CD4-positive, alpha-beta T cell (primary cell): ENCODE measurements at regions of chr5 and their contacts with region 1.

Region 1: GRCh38 chr5:69189162-69190086 is at the start of gene CENPH:
- DNase-seq: peak; percentile 80 to 94 (median 88)
- ATAC-seq: peak; percentile 92
- H3K4me3 ChIP-seq: peak within 1 kb of the TSS; percentile 80
- H3K4me3 Mint-ChIP-seq: peak within 1 kb of the TSS; percentile 92
- H3K27ac ChIP-seq: peak within 1 kb of the TSS; percentile 64 to 68
- H3K27ac Mint-ChIP-seq: peak within 1 kb of the TSS; percentile 83
- H3K4me1 ChIP-seq: peaks cover 17% of the 10 kb centered on the region
- H3K4me1 Mint-ChIP-seq: peaks cover 17% of the 10 kb centered on the region
- H3K27me3 ChIP-seq: no peaks in the 10 kb centered on the region
- H3K27me3 Mint-ChIP-seq: no peaks in the 10 kb centered on the region
- CTCF ChIP-seq: no peak
- total RNA-seq, gene CENPH: 4.0 to 5.6 TPM

Region 2: GRCh38 chr5:69013481-69013880 is 175.9 kb before region 1 on chr5:
- CTCF ChIA-PET with region 1: no interaction called
- POLR2A ChIA-PET with region 1: no interaction called
- intact Hi-C with region 1: no loop called
- DNase-seq: no peak
- ATAC-seq: no peak
- H3K4me3 ChIP-seq: no peak overlapping the region
- H3K4me3 Mint-ChIP-seq: no peak overlapping the region
- H3K27ac ChIP-seq: no peak overlapping the region
- H3K27ac Mint-ChIP-seq: no peak overlapping the region
- H3K4me1 ChIP-seq: no peaks in the 10 kb centered on the region
- H3K4me1 Mint-ChIP-seq: no peaks in the 10 kb centered on the region
- H3K27me3 ChIP-seq: no peaks in the 10 kb centered on the region
- H3K27me3 Mint-ChIP-seq: peaks cover 17% of the 10 kb centered on the region
- CTCF ChIP-seq: no peak

Region 3: GRCh38 chr5:69166686-69167492 is 22.5 kb before region 1 on chr5 and contains the start of gene CCNB1:
- CTCF ChIA-PET with region 1: no interaction called
- POLR2A ChIA-PET with region 1: interaction called, 4 read pairs
- intact Hi-C with region 1: loop called (anchors 1 kb)
- DNase-seq: peak; percentile 92 to 98 (median 96)
- ATAC-seq: peak; percentile 100
- H3K4me3 ChIP-seq: peak within 1 kb of the TSS; percentile 80
- H3K4me3 Mint-ChIP-seq: peak within 1 kb of the TSS; percentile 93
- H3K27ac ChIP-seq: peak within 1 kb of the TSS in 1 of 2 donors; percentile 46
- H3K27ac Mint-ChIP-seq: peak within 1 kb of the TSS; percentile 73
- H3K4me1 ChIP-seq: peaks cover 16% of the 10 kb centered on the region
- H3K4me1 Mint-ChIP-seq: peaks cover 23% of the 10 kb centered on the region
- H3K27me3 ChIP-seq: no peaks in the 10 kb centered on the region
- H3K27me3 Mint-ChIP-seq: no peaks in the 10 kb centered on the region
- CTCF ChIP-seq: no peak
- total RNA-seq, gene CCNB1: 1.4 to 1.5 TPM

Region 4: GRCh38 chr5:69209607-69210006 is 20.2 kb after region 1 on chr5:
- CTCF ChIA-PET with region 1: no interaction called
- POLR2A ChIA-PET with region 1: no interaction called
- intact Hi-C with region 1: loop called in 1 of 2 experiments (anchors 2 kb)
- DNase-seq: no peak
- ATAC-seq: no peak
- H3K4me3 ChIP-seq: no peak overlapping the region
- H3K4me3 Mint-ChIP-seq: no peak overlapping the region
- H3K27ac ChIP-seq: no peak overlapping the region
- H3K27ac Mint-ChIP-seq: no peak overlapping the region
- H3K4me1 ChIP-seq: no peaks in the 10 kb centered on the region
- H3K4me1 Mint-ChIP-seq: no peaks in the 10 kb centered on the region
- H3K27me3 ChIP-seq: no peaks in the 10 kb centered on the region
- H3K27me3 Mint-ChIP-seq: no peaks in the 10 kb centered on the region
- CTCF ChIP-seq: no peak

Region 5: GRCh38 chr5:69217548-69218526 is 28.4 kb after region 1 on chr5:
- CTCF ChIA-PET with region 1: interaction called, 3 read pairs
- POLR2A ChIA-PET with region 1: interaction called, 5 read pairs
- intact Hi-C with region 1: loop called (anchors 2 kb)
- DNase-seq: peak; percentile 85 to 99 (median 94)
- ATAC-seq: peak; percentile 91
- H3K4me3 ChIP-seq: peak overlapping the region; percentile 89
- H3K4me3 Mint-ChIP-seq: peak overlapping the region; percentile 95
- H3K27ac ChIP-seq: peak overlapping the region; percentile 88 to 93
- H3K27ac Mint-ChIP-seq: peak overlapping the region; percentile 98
- H3K4me1 ChIP-seq: peaks cover 5% of the 10 kb centered on the region
- H3K4me1 Mint-ChIP-seq: peaks cover 36% of the 10 kb centered on the region
- H3K27me3 ChIP-seq: no peaks in the 10 kb centered on the region
- H3K27me3 Mint-ChIP-seq: no peaks in the 10 kb centered on the region
- CTCF ChIP-seq: no peak

Region 6: DNA sequence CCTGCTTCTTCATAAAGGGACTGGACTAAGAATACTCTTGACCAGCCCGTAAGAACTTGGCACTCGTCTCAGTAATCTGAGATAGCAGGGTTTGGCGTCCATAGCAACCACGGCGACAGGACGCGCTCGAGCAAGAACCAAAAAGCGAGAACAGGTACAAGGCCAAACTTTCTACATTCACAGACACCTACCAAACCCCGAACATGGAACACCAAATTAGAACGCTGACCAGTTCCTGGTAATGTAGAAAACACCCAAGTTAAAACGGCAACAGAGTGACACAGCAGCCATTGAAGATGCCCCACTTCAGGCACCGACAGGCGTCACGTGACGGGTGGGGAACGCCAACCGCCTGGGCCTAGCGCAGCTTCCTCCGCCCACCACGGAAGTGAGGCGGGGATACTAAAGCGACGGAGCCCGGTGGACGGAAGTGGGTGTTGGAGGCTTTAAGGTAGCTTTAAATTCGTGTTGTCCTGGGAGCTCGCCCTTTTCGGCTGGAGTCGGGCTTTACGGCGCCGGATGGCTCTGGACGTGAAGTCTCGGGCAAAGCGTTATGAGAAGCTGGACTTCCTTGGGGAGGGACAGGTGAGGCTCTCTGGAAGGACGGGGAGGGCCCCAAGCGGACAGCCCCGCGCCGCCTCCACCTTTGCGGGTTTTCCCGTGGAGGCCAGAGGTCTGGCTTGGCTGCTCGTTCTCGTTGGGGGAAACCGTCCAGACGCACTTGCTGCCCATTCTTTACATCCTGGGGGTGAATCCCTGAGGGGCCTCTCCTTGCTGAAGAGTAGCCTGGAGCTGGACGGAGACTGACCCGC is 45.2 kb after region 1 on chr5 and contains the start of gene CDK7:
- CTCF ChIA-PET with region 1: no interaction called
- POLR2A ChIA-PET with region 1: interaction called, 15 read pairs
- intact Hi-C with region 1: loop called in 1 of 2 experiments (anchors 1 kb)
- DNase-seq: peak; percentile 80 to 96 (median 89)
- ATAC-seq: peak; percentile 99
- H3K4me3 ChIP-seq: peak within 1 kb of the TSS; percentile 90
- H3K4me3 Mint-ChIP-seq: peak within 1 kb of the TSS; percentile 95
- H3K27ac ChIP-seq: peak within 1 kb of the TSS; percentile 74 to 75
- H3K27ac Mint-ChIP-seq: peak within 1 kb of the TSS; percentile 86
- H3K4me1 ChIP-seq: peaks cover 23% of the 10 kb centered on the region
- H3K4me1 Mint-ChIP-seq: peaks cover 40% of the 10 kb centered on the region
- H3K27me3 ChIP-seq: no peaks in the 10 kb centered on the region
- H3K27me3 Mint-ChIP-seq: no peaks in the 10 kb centered on the region
- CTCF ChIP-seq: no peak
- total RNA-seq, gene CDK7: 30.1 to 33.0 TPM

Region 7: GRCh38 chr5:69369369-69370121 is 180.1 kb after region 1 on chr5 and contains the starts of genes AK6, RAD17 and TAF9:
- CTCF ChIA-PET with region 1: no interaction called
- POLR2A ChIA-PET with region 1: no interaction called
- intact Hi-C with region 1: loop called in 1 of 2 experiments (anchors 1 kb)
- DNase-seq: peak; percentile 83 to 95 (median 88)
- ATAC-seq: peak; percentile 86
- H3K4me3 ChIP-seq: peak within 1 kb of the TSS; percentile 90
- H3K4me3 Mint-ChIP-seq: peak within 1 kb of the TSS; percentile 99
- H3K27ac ChIP-seq: peak within 1 kb of the TSS; percentile 94 to 98
- H3K27ac Mint-ChIP-seq: peak within 1 kb of the TSS; percentile 98
- H3K4me1 ChIP-seq: peaks cover 20% of the 10 kb centered on the region
- H3K4me1 Mint-ChIP-seq: peaks cover 55% of the 10 kb centered on the region
- H3K27me3 ChIP-seq: no peaks in the 10 kb centered on the region
- H3K27me3 Mint-ChIP-seq: no peaks in the 10 kb centered on the region
- CTCF ChIP-seq: no peak
- total RNA-seq, gene AK6: 8.2 to 10.6 TPM
- total RNA-seq, gene RAD17: 15.7 to 19.1 TPM
- total RNA-seq, gene TAF9: 53.8 to 54.2 TPM